ENCODE measurements at regions of chr5 and their contacts with region 1.

Region 1: GRCh38 chr5:107977550-107978071 is 306.9 kb upstream of the EFNA5 start:
- DNase-seq: no peak
- H3K4me3 ChIP-seq: no peak overlapping the region
- H3K27ac ChIP-seq: no peak overlapping the region
- H3K4me1 ChIP-seq: no peaks in the 10 kb centered on the region
- CTCF ChIP-seq: no peak

Region 2: GRCh38 chr5:108016101-108016500 is 38.5 kb after region 1 on chr5:
- CTCF ChIA-PET with region 1: no interaction called
- POLR2A ChIA-PET with region 1: no interaction called
- intact Hi-C with region 1: loop called (anchors 1 kb)
- DNase-seq: no peak
- H3K4me3 ChIP-seq: no peak overlapping the region
- H3K27ac ChIP-seq: no peak overlapping the region
- H3K4me1 ChIP-seq: no peaks in the 10 kb centered on the region
- CTCF ChIP-seq: no peak

Measured in OCI-LY7 (cell line).